Activated CD4-positive, alpha-beta memory T cell treated with anti-CD3 and anti-CD28 coated beads, Interleukin-2, amount 10 ng/mL, durations not matched to agents 7 days and 5 days (primary cell): ENCODE measurements at regions of chr12 and their contacts with region 1.

Region 1: DNA sequence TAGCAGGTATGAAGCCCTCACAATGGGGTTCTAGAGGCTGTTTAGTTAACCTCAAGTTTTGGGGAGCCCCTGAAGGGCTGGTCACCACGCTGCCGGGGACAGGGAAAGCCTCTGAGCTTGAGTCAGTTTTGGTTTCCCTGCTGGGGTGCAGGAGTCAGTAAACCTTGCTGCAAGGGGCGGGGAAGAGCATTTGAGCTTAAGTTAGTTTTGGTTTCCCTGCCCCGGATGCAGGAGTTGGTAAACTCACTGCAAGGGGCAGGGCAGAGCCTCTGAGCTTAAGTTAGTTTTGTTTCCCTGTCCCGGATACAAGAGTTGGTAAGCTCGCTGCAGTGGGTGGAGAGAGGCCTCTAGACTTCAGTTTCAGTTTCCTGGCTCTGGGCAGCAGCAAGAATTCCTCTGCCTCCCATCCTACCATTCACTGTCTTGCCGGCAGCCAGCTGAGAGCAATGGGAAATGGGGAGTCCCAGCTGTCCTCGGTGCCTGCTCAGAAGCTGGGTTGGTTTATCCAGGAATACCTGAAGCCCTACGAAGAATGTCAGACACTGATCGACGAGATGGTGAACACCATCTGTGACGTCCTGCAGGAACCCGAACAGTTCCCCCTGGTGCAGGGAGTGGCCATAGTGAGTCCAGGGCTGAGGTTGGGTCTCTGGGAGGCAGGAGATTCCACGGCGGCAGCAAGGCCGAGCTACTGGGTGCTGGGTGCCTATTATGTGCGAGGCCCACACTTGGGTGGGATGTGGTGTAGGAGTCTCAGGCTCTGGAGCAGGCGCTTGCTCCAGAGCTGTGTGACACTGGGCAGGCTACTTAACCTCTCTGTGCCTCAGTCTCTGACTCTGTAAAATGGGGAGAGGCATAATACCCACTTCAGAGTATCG is at the start of gene OAS2:
- DNase-seq: peak; percentile 91
- H3K4me3 Mint-ChIP-seq: peak within 1 kb of the TSS; percentile 87
- H3K27ac Mint-ChIP-seq: peak within 1 kb of the TSS; percentile 100
- H3K4me1 Mint-ChIP-seq: peaks cover 43% of the 10 kb centered on the region
- H3K27me3 Mint-ChIP-seq: no peaks in the 10 kb centered on the region
- total RNA-seq, gene OAS2: 327 to 331 TPM

Region 2: DNA sequence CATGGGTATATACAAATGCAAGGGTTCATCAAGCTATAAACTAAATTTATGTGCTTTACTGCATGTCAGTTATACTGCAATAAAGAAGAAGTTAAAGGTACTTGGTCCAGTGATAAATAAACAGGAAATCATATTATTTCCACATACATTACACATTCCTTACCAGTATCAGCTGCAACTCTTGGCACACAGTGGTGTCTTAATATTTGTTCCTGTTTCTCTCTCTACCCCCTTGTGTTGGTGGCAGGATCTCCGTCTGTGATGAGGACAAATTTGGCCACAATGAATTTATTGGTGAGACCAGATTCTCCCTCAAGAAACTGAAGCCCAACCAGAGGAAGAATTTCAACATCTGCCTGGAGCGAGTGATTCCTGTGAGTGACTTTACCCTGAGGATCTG is 90.9 kb before region 1 on chr12:
- CTCF ChIA-PET with region 1: no interaction called
- POLR2A ChIA-PET with region 1: no interaction called
- DNase-seq: no peak
- H3K4me3 Mint-ChIP-seq: no peak overlapping the region
- H3K27ac Mint-ChIP-seq: no peak overlapping the region
- H3K4me1 Mint-ChIP-seq: no peaks in the 10 kb centered on the region
- H3K27me3 Mint-ChIP-seq: peaks cover 27% of the 10 kb centered on the region

Region 3: GRCh38 chr12:112900299-112901145 is 77.9 kb before region 1 on chr12:
- CTCF ChIA-PET with region 1: interaction called, 35 read pairs
- POLR2A ChIA-PET with region 1: interaction called, 183 read pairs
- DNase-seq: peak; percentile 49
- H3K4me3 Mint-ChIP-seq: no peak overlapping the region
- H3K27ac Mint-ChIP-seq: no peak overlapping the region
- H3K4me1 Mint-ChIP-seq: peaks cover 38% of the 10 kb centered on the region
- H3K27me3 Mint-ChIP-seq: peaks cover 25% of the 10 kb centered on the region

Region 4: DNA sequence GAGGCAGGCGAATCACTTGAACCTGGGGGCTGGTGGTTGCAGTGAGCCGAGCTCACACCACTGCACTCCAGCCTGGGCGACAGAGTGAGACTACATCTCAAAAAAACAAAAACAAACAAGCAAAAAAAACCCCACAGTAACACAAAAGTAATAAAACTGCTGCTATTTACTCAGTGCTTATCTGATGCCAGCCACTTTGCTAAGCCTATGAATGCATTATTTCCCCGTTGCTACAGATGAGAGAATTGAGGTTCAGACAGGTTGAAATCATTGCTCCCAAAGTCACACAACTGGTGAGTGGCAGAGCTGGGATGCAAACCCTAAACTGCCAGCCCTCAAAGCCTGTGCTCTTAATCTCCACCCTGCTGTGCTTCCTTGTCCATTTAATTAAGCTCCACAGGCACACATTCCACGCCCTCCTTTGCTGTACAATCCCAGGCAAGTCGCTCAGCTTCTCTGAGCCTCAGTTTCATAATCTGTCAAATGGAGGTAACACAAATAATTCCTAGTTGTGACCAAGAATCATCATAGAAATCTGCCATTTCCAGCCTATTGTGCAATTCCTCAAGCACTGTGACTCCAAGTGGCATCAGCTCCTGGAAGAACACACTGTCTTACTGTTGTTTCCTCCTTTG is 45.8 kb before region 1 on chr12:
- CTCF ChIA-PET with region 1: interaction called, 11 read pairs
- POLR2A ChIA-PET with region 1: interaction called, 55 read pairs
- DNase-seq: no peak
- H3K4me3 Mint-ChIP-seq: no peak overlapping the region
- H3K27ac Mint-ChIP-seq: no peak overlapping the region
- H3K4me1 Mint-ChIP-seq: peaks cover 20% of the 10 kb centered on the region
- H3K27me3 Mint-ChIP-seq: no peaks in the 10 kb centered on the region

Region 5: DNA sequence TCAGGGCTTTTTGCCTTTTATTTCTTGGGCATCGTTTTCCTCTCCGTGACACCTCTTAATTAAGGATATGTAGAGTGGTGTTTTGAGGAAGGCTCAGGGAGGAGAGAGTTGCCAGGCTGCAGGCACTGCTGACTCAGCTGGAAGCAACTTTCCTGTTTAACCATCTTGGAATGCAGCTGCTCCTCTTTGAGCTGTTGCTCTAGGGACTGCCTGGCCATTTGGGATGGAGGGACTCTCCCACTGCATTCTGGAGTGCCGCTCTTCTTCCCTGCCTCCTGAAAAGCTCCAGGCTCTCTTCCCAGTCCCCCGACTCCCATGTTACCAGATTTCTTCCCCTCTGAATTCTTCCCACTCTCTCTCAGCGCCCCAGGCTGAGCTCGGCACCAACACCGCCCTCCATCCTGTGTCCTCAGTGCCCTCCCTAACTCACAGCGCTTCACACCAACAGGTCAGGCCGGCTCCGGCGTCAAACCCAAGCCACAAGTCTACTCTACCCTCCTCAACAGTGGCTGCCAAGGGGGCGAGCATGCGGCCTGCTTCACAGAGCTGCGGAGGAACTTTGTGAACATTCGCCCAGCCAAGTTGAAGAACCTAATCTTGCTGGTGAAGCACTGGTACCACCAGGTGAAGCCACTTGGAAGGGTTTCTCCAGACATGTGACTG is 34.2 kb before region 1 on chr12:
- CTCF ChIA-PET with region 1: interaction called, 6 read pairs
- POLR2A ChIA-PET with region 1: interaction called, 47 read pairs
- DNase-seq: no peak
- H3K4me3 Mint-ChIP-seq: no peak overlapping the region
- H3K27ac Mint-ChIP-seq: no peak overlapping the region
- H3K4me1 Mint-ChIP-seq: peaks cover 41% of the 10 kb centered on the region
- H3K27me3 Mint-ChIP-seq: no peaks in the 10 kb centered on the region

Region 6: DNA sequence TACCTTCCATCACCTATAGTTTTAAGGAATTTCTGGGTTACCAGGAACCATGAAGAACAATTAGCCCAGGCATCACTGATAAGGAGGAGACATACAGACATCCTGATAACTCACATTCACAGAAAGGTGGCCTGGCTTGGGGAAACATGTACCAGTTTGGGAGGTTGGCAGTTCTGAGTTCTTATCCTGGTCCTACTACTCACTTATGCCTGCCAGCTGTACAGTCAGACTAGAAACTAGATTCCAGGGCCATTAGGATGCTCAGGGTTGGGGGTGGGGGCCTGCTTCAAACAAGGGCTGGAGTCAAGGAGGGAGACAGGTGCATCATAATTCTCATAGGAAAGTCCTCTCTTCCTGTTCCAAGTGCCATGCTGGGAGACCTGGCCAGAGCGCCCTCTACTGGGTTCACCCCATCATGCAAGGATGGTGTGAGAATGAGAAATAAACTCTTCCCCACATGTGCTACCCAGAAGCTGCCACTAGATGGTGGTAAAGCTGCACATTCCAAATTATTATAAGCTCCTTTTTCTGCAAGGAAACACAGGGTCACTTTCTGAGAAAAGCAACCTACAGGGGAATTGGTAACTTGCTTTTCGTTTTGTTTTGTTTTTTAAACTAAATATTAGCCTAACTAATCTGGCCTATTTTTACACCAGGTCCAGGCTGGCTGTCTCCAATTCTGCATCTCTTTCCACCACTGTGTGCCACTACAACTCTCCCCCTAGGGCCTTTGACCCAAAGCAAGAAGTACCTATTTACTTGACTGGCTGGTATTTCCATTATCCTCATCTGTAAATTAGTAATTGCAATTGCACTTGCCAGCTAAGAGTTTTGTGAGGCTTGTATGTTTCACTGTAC is 14.4 kb after region 1 on chr12:
- CTCF ChIA-PET with region 1: interaction called, 69 read pairs
- POLR2A ChIA-PET with region 1: interaction called, 141 read pairs
- DNase-seq: peak; percentile 77
- H3K4me3 Mint-ChIP-seq: no peak overlapping the region
- H3K27ac Mint-ChIP-seq: peak overlapping the region; percentile 21
- H3K4me1 Mint-ChIP-seq: peaks cover 45% of the 10 kb centered on the region
- H3K27me3 Mint-ChIP-seq: no peaks in the 10 kb centered on the region

Region 7: GRCh38 chr12:113098446-113098896 is 120.1 kb after region 1 on chr12:
- CTCF ChIA-PET with region 1: no interaction called
- POLR2A ChIA-PET with region 1: no interaction called
- DNase-seq: peak; percentile 52
- H3K4me3 Mint-ChIP-seq: no peak overlapping the region
- H3K27ac Mint-ChIP-seq: no peak overlapping the region
- H3K4me1 Mint-ChIP-seq: peaks cover 2% of the 10 kb centered on the region
- H3K27me3 Mint-ChIP-seq: no peaks in the 10 kb centered on the region

Region 8: DNA sequence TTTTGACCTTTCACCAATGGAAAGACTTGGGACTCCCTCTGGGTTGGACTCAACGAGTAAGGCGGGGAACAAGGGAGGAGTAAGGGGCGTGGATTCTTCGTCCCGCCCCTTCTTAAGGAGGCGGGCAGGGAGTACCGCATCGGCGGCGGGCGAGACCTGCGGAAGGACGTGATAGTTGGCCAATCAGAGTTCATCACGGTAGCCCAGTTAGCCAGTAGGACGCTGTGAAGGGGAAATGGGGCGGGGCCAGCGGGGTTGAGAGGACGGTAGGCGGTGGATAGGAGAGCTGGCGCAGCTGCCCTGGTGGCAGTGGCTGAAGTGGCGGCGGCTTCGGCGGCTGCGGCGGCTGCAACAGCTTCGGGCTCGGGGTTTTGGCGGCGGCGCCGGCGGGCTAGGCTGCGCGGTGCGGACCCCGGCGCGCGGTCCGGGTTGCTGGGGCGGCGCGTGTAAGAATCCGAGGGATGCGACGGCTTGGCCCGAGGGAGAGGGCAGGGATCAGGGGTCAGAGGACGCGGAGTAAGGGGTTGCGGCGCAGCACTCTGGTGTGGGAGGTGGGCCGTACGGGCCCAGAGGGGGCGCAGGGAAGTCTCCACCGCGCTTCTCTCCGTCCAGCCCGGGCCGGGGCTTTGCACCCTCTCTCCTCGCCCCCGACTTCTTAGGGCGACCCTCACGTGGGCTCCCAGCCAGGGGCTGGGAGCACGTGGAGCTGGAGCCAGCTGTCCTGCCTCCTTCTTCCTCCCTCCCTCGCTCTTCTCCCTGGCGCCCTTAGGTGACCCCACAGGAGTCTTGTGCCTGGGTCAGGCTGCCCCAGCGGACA is 243.0 kb after region 1 on chr12 and contains the start of gene TPCN1:
- CTCF ChIA-PET with region 1: no interaction called
- POLR2A ChIA-PET with region 1: interaction called, 10 read pairs
- DNase-seq: peak; percentile 99
- H3K4me3 Mint-ChIP-seq: peak within 1 kb of the TSS; percentile 79
- H3K27ac Mint-ChIP-seq: peak within 1 kb of the TSS; percentile 81
- H3K4me1 Mint-ChIP-seq: peaks cover 34% of the 10 kb centered on the region
- H3K27me3 Mint-ChIP-seq: no peaks in the 10 kb centered on the region
- total RNA-seq, gene TPCN1: 18.3 to 19.2 TPM

Region 9: DNA sequence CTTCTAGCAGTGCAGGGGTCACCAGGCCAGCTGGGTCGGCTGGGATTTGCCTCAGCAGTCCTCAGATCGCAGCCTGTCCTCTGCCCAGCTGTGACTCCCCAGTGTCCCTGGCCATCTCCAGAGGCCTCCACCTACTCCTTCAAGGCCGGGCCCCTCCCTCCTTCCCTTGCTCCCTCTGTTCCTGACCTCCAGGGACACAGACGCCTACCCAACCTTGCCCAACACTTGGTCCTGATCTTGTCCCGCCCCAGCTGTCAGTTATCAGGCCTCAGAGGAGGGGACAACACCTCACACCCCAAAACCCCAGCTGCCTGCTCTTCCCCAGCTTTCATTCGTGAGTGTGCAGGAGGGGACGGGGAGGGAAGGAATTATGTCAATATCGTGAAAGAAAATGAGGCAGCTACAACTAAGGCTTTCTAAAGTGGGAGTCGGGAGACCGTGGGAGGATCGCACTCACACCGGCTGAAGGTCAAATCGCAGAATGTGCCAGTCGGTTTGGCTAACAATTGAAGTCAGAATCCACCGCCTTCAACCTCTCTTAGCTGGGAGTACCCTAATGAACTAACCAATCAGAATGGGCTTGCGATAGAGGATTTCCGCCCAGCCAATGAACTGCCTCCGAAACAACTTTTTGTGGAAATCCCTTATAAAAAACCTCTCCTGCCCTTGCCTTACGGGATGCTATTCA is 370.6 kb after region 1 on chr12:
- CTCF ChIA-PET with region 1: no interaction called
- POLR2A ChIA-PET with region 1: no interaction called
- DNase-seq: no peak
- H3K4me3 Mint-ChIP-seq: no peak overlapping the region
- H3K27ac Mint-ChIP-seq: no peak overlapping the region
- H3K4me1 Mint-ChIP-seq: no peaks in the 10 kb centered on the region
- H3K27me3 Mint-ChIP-seq: peaks cover 13% of the 10 kb centered on the region